ENCODE measurements at regions of chr11 and their contacts with region 1.

Region 1: DNA sequence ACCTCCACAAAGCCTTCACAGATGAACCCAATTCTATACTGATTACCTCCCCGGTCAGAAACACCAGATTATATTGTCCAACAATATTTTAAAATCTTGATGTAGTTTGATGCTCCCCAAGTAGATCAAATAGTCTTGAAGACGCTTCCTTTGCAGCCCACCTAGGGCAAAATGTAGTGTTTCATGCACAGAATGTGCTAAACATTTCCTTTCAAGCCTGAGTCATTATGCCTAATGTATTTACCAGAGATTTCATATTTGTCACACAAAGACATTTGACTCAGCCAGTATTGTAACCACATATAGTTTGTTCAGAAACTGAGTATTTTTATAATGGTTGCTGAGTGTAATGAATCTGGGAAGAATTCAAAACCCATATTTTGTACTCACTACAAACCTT is 1396.8 kb downstream of the LRRC4C start:
- DNase-seq: no peak
- H3K4me3 Mint-ChIP-seq: no peak overlapping the region
- H3K27ac Mint-ChIP-seq: no peak overlapping the region
- H3K4me1 Mint-ChIP-seq: no peaks in the 10 kb centered on the region
- H3K27me3 Mint-ChIP-seq: no peaks in the 10 kb centered on the region

Region 2: GRCh38 chr11:40104941-40105550 is 42.4 kb after region 1 on chr11:
- CTCF ChIA-PET with region 1: no interaction called
- intact Hi-C with region 1: loop called (anchors 1 kb)
- DNase-seq: no peak
- H3K4me3 Mint-ChIP-seq: no peak overlapping the region
- H3K27ac Mint-ChIP-seq: no peak overlapping the region
- H3K4me1 Mint-ChIP-seq: no peaks in the 10 kb centered on the region
- H3K27me3 Mint-ChIP-seq: no peaks in the 10 kb centered on the region